Heart left ventricle (tissue), 16 donors: ENCODE measurements at regions of chr1 and their contacts with region 1.

Region 1: DNA sequence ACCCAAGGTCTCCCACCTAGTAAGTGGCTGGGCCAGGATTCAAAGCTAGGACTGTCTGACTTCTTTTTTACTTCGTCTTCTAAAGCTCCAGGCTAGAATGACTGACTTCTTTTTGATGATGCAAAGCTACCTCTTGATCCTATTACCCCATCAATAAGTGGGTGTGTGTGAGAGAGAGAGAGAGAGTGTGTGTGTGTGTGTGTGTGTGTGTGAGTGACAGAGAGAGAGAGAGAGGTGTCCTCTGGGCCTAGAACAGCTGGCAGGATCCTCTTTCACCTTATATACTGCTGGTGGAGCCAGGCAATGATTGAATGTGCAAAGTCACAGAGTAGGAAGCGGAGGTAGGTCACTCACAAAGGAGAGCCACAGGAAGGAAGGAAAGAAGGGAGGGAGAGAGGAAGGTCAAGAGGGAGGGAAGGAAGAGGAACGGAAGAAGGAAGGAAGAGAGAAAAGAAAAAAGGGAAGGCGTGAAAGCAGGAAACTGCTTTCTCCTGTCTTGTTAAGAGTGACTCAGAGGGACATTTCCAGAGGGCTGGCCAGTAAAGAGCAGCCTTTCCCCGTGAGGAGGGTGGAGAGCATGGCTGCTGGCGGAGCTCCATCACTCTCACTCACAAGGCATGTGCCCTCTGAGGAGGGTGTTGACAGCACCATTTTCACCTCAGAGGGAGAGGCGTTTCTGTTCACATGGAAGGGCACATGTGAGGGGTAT is 68.9 kb downstream of the CDC7 start:
- DNase-seq: peak; percentile 81 to 94 (median 85)
- ATAC-seq: peak; percentile 97 to 98 (median 98)
- H3K4me3 ChIP-seq: peak overlapping the region in 1 of 12 donors; percentile 4
- H3K27ac ChIP-seq: peak overlapping the region; percentile 20 to 91 (median 78)
- H3K4me1 ChIP-seq: peaks cover 0 to 46% (median 20%) of the 10 kb centered on the region in 12 donors
- H3K27me3 ChIP-seq: no peaks in the 10 kb centered on the region
- CTCF ChIP-seq: no peak
- POLR2A ChIP-seq: no peak

Region 2: DNA sequence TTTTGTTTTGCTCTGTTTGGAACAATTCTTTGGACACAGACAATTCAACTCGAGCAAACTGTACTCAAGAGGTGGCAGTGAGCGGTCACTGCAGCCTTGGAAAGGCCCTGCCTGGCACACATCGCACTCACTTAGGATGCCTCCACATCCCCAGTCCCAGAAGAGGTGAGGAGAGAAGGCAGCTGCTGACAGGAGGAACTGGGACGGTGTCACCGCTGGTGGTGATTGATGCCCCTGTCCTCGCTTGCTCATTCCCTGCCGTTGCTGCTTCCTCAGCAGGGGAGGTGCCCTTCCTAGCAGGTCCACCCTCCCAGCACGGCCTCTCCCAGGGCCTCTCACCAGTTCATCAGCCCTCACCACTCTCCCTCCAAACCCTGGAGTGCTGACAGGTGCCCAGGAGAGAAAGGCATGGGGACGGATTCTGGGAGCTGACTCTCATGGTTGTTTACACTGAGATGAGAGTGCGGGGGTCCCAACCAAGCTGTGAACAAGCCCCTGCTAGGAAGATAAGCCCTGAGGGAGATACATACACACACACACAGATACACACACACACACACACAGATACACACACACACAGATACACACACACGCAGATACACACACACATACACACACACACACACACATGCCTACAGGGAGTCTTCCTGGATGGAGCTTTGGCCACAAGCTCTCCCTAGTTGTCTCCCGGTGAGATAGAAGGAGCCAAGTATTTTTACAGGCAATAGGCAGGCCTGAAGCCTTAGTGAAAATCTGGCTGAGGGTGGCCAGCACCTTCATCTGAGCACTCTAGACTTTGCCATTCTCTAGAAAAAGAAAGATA is 32.2 kb after region 1 on chr1:
- intact Hi-C with region 1: loop called in 1 of 10 experiments (anchors 1 kb)
- DNase-seq: peak; percentile 55 to 93 (median 84)
- ATAC-seq: peak; percentile 93 to 97 (median 94)
- H3K4me3 ChIP-seq: no peak overlapping the region
- H3K27ac ChIP-seq: peak overlapping the region in 11 of 12 donors; percentile 28 to 80 (median 64)
- H3K4me1 ChIP-seq: peaks cover 0 to 31% (median 2%) of the 10 kb centered on the region in 12 donors
- H3K27me3 ChIP-seq: no peaks in the 10 kb centered on the region
- CTCF ChIP-seq: no peak
- POLR2A ChIP-seq: no peak

Region 3: DNA sequence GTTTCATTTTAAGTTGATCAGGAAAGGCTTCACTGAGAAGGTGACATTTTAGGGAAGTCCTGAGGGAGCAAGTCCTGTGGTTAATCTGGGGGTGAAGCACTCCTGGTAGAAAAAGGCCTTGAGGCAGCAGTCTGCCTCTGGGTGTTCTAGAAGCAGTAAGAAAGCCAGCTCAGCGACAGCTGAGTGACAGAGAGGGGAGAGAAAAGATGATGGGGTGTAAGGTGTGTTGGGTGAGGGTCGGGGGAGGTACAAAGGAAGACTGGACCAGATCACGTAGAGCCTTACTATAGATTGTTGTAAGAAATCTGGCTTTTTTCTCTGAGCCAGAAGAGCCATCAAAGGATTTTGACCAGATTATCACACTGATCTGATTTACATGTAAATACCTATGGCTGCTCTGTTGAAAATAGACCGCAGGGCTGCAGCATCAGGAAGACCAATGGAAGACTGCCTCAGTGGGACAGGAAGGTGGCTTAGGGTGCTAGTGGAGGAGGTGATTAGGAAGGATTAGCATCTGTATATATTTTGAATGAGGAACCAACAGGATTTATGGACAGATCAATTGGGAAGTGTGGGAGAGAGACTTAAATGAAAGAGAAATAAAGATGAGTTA is 62.3 kb after region 1 on chr1:
- intact Hi-C with region 1: no loop called
- DNase-seq: no peak
- ATAC-seq: no peak
- H3K4me3 ChIP-seq: no peak overlapping the region
- H3K27ac ChIP-seq: no peak overlapping the region
- H3K4me1 ChIP-seq: no peaks in the 10 kb centered on the region
- H3K27me3 ChIP-seq: no peaks in the 10 kb centered on the region
- CTCF ChIP-seq: no peak
- POLR2A ChIP-seq: no peak